AG04449 (cell line): ENCODE measurements at regions of chr1 and their contacts with region 1.

Region 1: DNA sequence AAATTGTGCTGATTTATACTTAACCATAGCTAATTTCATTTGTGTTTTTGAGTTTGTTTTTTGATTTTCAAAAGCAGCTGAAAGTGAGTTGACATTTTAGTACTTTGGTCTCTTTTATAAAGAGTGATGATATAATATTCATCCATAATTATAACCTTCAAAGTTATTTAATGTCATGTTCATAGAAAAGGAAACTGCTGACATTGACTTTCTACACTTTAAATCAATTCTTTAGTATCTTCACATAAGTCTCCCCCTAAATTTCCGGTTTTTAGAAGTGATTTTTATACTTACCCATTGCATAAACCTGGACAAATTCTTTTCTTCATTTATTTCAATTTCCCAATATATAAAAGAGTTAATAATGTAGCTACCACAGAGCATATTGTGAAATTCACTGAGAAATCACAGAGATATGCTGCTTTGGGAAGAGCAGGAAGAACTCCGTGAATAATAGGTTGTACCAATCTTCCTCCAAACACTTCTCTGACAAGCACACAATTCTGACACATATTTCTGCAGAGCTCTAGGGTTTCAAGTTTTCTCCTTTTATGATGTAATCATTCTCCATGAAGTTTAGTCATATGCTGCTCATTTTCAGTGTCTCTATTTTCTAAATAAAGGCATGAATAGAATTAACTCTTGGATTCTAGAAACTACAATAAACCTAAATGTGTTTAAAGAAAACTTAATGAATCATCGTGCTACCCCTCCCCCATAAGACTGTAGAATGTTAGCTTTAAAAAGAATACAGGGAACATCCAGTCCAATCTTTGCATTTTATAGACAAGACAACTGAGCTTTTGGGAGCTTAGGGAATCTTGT is 25.6 kb upstream of the CDC42BPA start:
- DNase-seq: peak; percentile 85
- H3K4me3 ChIP-seq: no peak overlapping the region
- CTCF ChIP-seq: no peak

Region 2: DNA sequence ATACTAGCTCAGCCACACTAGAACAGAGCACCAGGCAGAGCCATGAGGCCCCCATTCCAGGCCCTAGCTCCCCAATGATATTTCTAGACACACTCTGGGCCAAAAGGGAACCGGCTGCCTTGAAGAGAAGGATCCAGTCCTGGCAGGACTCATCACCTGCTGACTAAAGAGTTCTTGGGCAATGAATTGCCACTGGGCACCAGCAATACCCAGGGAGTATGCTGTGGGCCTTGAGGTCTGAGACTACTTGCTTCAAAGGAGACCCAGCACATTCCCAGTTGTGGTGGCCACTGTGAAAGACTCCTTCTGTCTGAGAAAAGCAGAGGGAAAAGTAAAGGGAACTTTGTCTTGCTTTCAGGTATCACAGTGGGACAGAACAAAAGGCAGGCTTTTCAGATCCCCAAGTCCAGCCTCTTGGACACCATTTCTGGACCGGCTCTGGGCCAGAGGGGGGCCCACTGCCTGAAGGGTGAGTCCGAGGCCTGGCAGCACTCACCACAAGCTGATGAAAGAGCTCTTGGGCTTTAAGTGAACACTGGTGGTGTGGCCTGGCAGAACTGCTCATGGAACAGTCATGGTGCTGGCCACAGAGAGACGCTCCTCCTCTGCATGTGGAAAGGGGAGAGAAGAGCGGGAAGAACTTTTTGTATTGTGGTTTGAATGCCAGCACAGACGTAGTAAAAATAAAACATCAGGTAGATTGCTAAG is 98.2 kb before region 1 on chr1:
- CTCF ChIA-PET with region 1: no interaction called
- POLR2A ChIA-PET with region 1: no interaction called
- DNase-seq: no peak
- H3K4me3 ChIP-seq: no peak overlapping the region
- CTCF ChIP-seq: no peak

Region 3: DNA sequence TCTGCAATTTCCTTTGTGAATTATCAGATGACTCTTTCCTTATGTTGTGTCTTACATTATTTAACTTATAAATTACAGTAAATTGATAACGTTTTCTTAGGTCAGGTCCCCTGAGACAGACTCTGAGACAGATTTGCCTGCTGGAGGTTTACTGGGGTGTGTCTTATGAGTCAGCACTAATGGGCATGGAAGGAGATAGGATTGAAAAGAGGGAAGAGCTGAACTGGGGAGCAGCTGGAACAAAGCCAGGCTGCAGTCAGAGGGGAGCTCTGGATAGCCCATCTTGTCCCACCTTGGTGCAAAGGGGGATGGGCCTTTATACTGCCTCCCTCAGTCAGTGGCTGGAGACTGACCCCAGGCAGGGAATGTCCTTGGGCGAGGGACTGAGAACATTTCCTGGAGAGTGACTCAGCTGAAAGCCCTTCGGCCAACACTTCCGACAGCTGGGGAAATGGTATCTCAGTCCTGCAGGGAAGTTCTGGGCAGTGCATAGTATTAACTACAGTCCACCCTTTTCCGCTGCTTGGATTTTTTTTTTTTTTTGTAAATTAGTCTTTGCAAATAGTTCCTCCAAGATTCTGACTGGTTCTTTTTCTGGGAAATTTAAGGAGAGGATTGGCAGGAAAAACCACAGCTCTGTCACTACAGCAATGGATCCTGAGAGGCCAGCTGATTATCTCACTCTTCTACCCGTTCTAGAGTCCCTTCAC is 13.4 kb after region 1 on chr1:
- CTCF ChIA-PET with region 1: interaction called, 7 read pairs
- POLR2A ChIA-PET with region 1: interaction called, 12 read pairs
- DNase-seq: no peak
- H3K4me3 ChIP-seq: no peak overlapping the region
- CTCF ChIP-seq: no peak